ENCODE measurements at regions of chr19 and their contacts with region 1.

Region 1: GRCh38 chr19:10251792-10252694 is at the start of gene MRPL4:
- DNase-seq: peak; percentile 100
- ATAC-seq: peak; percentile 96
- H3K4me3 ChIP-seq: peak within 1 kb of the TSS; percentile 97
- H3K27ac ChIP-seq: peak within 1 kb of the TSS; percentile 46
- H3K4me1 ChIP-seq: peaks cover 8% of the 10 kb centered on the region; the same call in 1 of the 2 replicates
- H3K27me3 ChIP-seq: no peaks in the 10 kb centered on the region
- CTCF ChIP-seq: no peak
- total RNA-seq, gene MRPL4: 336 and 427 TPM in 2 replicates

Region 2: DNA sequence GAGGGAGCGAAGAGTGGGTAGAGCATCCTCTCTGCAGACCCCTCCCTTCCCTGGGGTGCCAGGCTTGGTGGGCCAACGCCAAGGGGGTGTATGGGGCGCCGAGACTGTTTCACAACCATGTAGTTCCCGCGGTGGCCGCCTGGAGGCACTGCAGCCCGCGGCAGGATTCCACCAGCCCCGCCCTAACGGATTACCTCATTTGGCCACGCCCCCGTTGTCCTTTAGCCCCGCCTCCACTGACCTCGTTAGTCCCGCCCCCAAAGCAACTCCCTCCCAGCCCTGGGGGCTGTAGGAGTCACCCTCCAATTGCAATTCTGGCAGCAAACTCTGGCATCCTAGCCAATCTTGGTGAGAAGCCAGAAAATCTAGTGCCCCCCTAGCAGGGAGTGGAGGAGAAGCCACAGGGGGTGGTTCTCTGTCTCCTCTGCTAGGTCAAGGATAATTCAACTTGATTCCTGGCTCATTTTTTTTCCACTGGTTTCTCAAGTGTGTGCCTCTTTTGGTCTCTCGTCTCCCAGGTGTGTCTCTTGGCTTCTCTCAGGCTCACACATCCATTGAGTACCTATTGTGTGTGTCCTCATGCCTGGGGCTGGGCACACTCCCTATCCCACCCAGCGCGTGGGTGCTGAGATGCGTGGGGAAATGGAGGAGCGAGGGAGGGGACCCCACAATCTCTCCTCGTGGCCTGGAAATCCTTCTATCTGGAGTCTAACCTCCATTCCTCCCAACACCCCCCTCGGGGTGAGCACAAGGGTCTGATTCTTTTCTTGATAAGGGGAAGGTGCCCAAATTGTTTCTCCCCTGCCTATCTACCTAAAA is 317.7 kb before region 1 on chr19:
- CTCF ChIA-PET with region 1: no interaction called
- POLR2A ChIA-PET with region 1: no interaction called
- intact Hi-C with region 1: loop called (anchors 1 kb)
- DNase-seq: peak; percentile 89
- ATAC-seq: peak; percentile 59
- H3K4me3 ChIP-seq: no peak overlapping the region
- H3K27ac ChIP-seq: no peak overlapping the region
- H3K4me1 ChIP-seq: peaks cover 5% of the 10 kb centered on the region
- H3K27me3 ChIP-seq: peaks cover 14% of the 10 kb centered on the region
- CTCF ChIP-seq: peak; percentile 98

Region 3: GRCh38 chr19:10095948-10096621 is 156.0 kb before region 1 on chr19:
- CTCF ChIA-PET with region 1: interaction called, 4 read pairs
- POLR2A ChIA-PET with region 1: no interaction called
- intact Hi-C with region 1: loop called (anchors 1 kb)
- DNase-seq: peak; percentile 99
- ATAC-seq: peak; percentile 92
- H3K4me3 ChIP-seq: peak overlapping the region; percentile 40
- H3K27ac ChIP-seq: no peak overlapping the region
- H3K4me1 ChIP-seq: peaks cover 11% of the 10 kb centered on the region
- H3K27me3 ChIP-seq: no peaks in the 10 kb centered on the region
- CTCF ChIP-seq: no peak

Region 4: DNA sequence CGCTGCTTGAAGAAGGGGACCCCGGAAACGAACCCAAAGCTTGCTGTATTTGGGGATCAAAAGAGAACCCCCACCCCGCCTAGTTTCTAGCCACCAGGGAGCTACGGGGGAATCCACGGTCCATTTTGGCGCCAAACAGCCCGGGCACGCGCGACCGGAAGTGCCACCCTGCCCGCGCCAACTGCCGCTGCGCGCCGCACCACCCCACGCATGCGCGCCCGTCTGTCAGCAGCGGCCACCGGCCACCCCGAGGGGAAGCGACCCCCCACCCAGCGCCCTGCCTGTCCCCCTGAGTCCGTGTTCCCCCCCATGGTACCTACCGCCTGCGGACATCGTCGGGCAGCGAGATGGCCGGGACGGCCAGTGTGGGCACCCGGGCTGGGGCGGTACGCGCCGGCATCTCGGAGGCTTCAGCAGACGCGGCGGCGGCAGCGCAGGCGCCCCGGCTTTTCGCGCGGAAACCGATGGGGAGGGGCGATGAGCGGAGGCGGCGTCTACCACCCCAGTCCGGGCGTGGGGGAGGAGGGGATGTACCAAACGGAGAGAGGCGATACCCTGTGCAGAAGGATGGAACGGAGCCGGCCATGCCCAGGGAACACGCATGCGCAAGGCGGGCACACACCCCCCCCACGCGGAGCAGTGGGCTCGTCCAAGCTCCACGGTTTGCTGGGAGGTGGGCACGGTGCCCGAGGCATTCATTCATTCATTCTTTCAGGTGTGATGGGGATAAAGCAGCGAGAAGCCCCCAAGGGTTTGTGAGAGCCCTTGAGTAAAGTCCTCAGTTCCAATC is 57.3 kb before region 1 on chr19 and contains the start of gene DNMT1:
- CTCF ChIA-PET with region 1: interaction called, 7 read pairs
- POLR2A ChIA-PET with region 1: no interaction called
- intact Hi-C with region 1: loop called (anchors 1 kb)
- DNase-seq: peak; percentile 98
- ATAC-seq: peak; percentile 94
- H3K4me3 ChIP-seq: peak within 1 kb of the TSS; percentile 77
- H3K27ac ChIP-seq: peak within 1 kb of the TSS; percentile 71
- H3K4me1 ChIP-seq: peaks cover 23% of the 10 kb centered on the region
- H3K27me3 ChIP-seq: no peaks in the 10 kb centered on the region
- CTCF ChIP-seq: no peak
- total RNA-seq, gene DNMT1: 259 and 358 TPM in 2 replicates

Region 5: DNA sequence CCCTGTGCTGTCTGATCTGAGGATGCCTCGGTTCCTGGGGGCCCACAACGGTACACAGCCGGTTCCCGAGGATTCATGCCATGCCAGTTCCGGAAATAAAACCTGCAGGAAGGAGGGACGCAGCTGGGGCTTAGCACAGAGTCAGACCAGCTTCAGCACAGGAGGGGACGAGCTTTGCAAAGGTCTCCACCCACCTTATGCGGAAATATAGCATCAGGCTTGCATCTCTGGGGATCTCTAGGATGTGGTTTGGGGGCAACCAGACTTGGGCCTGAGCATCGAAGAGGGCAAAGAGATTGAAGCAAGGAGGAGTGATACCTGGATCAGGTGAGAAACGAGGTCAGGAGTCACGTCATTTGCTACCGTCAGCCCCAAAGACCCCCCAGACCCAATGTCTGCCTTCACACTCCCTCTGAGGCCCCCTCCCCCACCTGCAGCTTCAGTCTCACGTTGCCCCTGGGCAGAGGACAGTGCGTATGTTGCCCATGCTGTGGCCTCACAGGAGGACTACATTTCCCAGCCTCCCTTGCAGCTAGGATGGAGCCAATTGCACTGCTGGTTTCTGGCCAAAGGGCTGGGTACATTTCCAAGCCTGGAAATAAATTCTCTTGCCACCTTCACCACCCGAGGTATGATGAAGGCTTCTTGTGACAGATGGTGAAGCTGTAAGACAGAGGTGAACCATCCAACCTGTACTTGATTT is 116.2 kb after region 1 on chr19:
- CTCF ChIA-PET with region 1: no interaction called
- POLR2A ChIA-PET with region 1: interaction called, 14 read pairs
- intact Hi-C with region 1: no loop called
- DNase-seq: peak; percentile 31
- ATAC-seq: peak; percentile 35; the same call in 1 of the 2 replicates
- H3K4me3 ChIP-seq: no peak overlapping the region
- H3K27ac ChIP-seq: no peak overlapping the region
- H3K4me1 ChIP-seq: no peaks in the 10 kb centered on the region
- H3K27me3 ChIP-seq: no peaks in the 10 kb centered on the region
- CTCF ChIP-seq: no peak

Measured in PC-3 (cell line).